ENCODE measurements at regions of chr9 and their contacts with region 1.

Region 1: DNA sequence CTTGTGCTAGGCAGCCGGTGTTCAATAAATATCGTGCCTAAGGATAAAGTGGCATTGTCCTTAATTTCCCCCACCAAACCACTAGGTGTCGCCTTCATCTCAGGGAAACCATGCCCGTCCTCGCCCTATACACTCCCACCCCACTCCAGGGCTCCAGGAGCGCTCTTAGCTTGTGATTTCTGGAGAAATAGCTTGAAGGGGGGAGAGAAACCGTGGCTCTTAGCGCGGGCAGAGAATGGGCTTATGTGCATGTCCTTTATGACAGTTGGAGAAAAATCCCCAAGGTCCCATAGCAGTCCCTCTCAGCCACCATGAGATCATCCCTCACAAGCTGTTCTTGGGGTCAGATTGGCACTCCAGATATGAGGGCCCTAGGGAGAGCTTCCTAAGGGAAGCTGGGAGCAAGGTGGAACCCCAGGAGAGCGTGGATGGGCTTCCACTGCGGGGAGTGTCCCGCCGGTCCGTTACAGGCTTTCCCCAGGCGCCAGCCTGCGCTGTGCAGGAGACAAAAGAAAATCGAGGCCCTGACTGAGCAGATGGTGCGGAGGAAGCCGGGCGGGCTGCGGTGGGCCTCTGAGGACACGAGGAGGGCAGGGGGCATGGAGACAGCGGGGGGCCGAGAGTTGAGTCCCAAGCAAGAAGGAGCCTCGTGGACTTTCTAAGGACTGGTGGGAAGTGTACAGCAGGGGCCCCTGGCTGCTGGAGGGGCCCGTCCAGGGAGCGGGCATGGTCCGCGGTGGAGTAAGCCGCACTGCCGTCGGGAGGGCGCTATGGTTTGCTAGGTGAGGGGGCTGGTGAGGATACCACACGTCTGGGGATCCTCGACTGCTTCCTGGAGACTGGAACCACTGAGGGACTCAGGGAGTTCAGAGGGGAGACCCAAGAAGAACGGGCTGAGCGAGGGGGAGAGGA is 750 bp upstream of the NPR2 start:
- DNase-seq: peak; percentile 79
- ATAC-seq: peak; percentile 92
- H3K4me3 ChIP-seq: no peak overlapping the region
- H3K4me3 Mint-ChIP-seq: peak overlapping the region; percentile 41
- H3K27ac ChIP-seq: no peak overlapping the region
- H3K27ac Mint-ChIP-seq: peak overlapping the region; percentile 26
- H3K4me1 ChIP-seq: peaks cover 5% of the 10 kb centered on the region in 2 donors
- H3K4me1 Mint-ChIP-seq: peaks cover 9% of the 10 kb centered on the region
- H3K27me3 ChIP-seq: peaks cover 0 to 6% (median 3%) of the 10 kb centered on the region in 4 experiments
- H3K27me3 Mint-ChIP-seq: peaks cover 4% of the 10 kb centered on the region
- CTCF ChIP-seq: peak; percentile 93

Region 2: GRCh38 chr9:35716230-35716629 is 74.4 kb before region 1 on chr9:
- CTCF ChIA-PET with region 1: no interaction called
- POLR2A ChIA-PET with region 1: no interaction called
- intact Hi-C with region 1: no loop called
- DNase-seq: no peak
- ATAC-seq: no peak
- H3K4me3 ChIP-seq: no peak overlapping the region
- H3K4me3 Mint-ChIP-seq: no peak overlapping the region
- H3K27ac ChIP-seq: no peak overlapping the region
- H3K27ac Mint-ChIP-seq: peak overlapping the region; percentile 65
- H3K4me1 ChIP-seq: peaks cover 16 to 24% of the 10 kb centered on the region in 2 donors
- H3K4me1 Mint-ChIP-seq: peaks cover 26% of the 10 kb centered on the region
- H3K27me3 ChIP-seq: no peaks in the 10 kb centered on the region
- H3K27me3 Mint-ChIP-seq: no peaks in the 10 kb centered on the region
- CTCF ChIP-seq: no peak

Region 3: DNA sequence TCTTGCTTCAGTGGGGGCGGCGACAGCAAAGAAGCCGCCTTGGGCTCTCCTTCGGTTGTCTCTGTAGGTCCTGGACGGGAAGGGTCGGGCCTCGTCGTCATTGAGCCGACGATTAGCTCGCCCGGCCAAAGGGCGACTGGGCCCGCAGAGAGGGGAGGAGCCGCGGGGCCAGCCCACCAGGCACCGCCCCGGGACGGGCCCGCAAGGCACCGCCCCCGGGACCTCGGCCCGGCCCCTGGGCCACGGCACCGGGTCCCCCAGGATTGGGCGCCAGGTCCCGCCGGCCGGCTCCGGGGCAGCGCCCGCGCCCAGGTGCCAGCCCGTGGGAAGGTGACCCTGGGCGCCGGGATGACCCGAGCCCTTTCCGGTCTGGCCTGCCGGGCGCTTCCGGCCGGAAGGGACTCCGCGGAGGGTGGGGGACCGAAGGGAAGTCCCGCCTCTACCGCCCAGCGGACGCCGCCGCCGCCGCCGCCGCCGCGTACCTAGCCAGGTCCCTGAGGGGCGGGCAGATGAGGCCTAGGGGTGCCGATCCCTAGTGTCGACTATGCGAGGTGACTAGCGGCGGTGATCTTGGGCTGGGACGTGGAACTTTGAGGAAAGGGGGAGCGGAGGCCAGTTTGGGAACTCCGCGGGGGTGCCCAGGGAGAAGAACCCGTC is 41.7 kb before region 1 on chr9 and contains the starts of genes GBA2 and RGP1:
- CTCF ChIA-PET with region 1: interaction called, 19 read pairs
- POLR2A ChIA-PET with region 1: no interaction called
- intact Hi-C with region 1: no loop called
- DNase-seq: peak; percentile 82
- ATAC-seq: peak; percentile 83
- H3K4me3 ChIP-seq: peak within 1 kb of the TSS; percentile 73 to 92 (median 84)
- H3K4me3 Mint-ChIP-seq: peak within 1 kb of the TSS; percentile 96
- H3K27ac ChIP-seq: peak within 1 kb of the TSS; percentile 71 to 77
- H3K27ac Mint-ChIP-seq: peak within 1 kb of the TSS; percentile 96
- H3K4me1 ChIP-seq: peaks cover 37 to 41% of the 10 kb centered on the region in 2 donors
- H3K4me1 Mint-ChIP-seq: peaks cover 50% of the 10 kb centered on the region
- H3K27me3 ChIP-seq: no peaks in the 10 kb centered on the region
- H3K27me3 Mint-ChIP-seq: no peaks in the 10 kb centered on the region
- CTCF ChIP-seq: no peak
- total RNA-seq, gene GBA2: 137 and 158 TPM in 2 replicates
- total RNA-seq, gene RGP1: 42.3 and 44.3 TPM in 2 replicates

Region 4: DNA sequence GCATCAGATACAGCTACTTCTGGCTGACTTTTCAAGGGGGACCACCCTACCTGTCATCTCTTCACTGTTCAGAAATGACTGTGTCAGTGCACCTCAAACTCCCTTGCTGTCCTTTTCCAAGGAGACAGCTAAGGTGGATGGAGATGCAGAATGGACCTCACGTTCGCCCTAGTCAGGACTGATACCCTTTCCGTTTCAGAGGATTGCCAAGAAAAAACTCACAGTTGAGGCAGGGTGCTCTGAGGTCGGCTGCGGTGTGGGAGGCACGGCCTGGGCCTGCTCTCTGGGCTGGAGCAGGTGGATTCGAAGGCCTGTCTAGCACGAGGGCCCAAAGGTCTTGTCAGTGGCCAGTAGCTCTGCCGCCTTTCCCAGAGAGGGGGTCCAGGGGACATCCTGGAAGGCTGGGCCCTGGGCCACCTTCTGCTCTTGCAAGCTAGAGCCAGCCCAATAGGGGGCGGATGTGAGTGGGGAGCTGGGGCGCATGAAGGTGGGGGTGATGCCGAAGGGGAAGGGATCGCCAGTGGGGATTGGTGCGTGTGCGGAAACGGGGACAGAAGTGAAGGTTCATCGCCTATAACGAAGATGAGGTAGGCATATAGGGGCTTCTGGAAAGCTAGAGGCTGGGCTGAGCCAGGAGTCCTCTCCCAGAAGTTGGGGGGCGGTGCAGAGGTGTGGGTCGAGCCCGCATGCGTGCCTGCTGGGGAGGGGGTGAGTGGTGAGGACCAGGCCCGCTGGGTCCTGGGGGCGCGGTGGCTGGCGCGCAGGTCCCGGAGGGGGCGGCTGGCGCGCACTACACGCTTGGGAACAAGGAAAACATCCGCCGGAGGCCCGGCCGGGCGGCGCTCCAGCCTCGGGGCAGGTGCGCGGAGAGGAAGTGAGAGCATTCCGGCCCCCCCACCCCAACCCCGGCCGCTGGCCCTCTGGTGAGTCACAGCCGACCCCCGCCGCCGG is 34.1 kb before region 1 on chr9:
- CTCF ChIA-PET with region 1: interaction called, 4 read pairs
- POLR2A ChIA-PET with region 1: no interaction called
- intact Hi-C with region 1: loop called (anchors 2 kb)
- DNase-seq: peak; percentile 84
- ATAC-seq: peak; percentile 80
- H3K4me3 ChIP-seq: peak overlapping the region; percentile 39 to 85 (median 81)
- H3K4me3 Mint-ChIP-seq: peak overlapping the region; percentile 93
- H3K27ac ChIP-seq: peak overlapping the region; percentile 92 to 94
- H3K27ac Mint-ChIP-seq: peak overlapping the region; percentile 97
- H3K4me1 ChIP-seq: peaks cover 34 to 44% of the 10 kb centered on the region in 2 donors
- H3K4me1 Mint-ChIP-seq: peaks cover 65% of the 10 kb centered on the region
- H3K27me3 ChIP-seq: no peaks in the 10 kb centered on the region
- H3K27me3 Mint-ChIP-seq: no peaks in the 10 kb centered on the region
- CTCF ChIP-seq: peak; percentile 70

Region 5: GRCh38 chr9:35774907-35775635 is 15.6 kb before region 1 on chr9:
- CTCF ChIA-PET with region 1: interaction called, 22 read pairs
- POLR2A ChIA-PET with region 1: no interaction called
- intact Hi-C with region 1: no loop called
- DNase-seq: no peak
- ATAC-seq: no peak
- H3K4me3 ChIP-seq: no peak overlapping the region
- H3K4me3 Mint-ChIP-seq: peak overlapping the region; percentile 16
- H3K27ac ChIP-seq: peak overlapping the region in 1 of 2 donors; percentile 11
- H3K27ac Mint-ChIP-seq: peak overlapping the region; percentile 85
- H3K4me1 ChIP-seq: peaks cover 6 to 15% of the 10 kb centered on the region in 2 donors
- H3K4me1 Mint-ChIP-seq: peaks cover 15% of the 10 kb centered on the region
- H3K27me3 ChIP-seq: no peaks in the 10 kb centered on the region
- H3K27me3 Mint-ChIP-seq: no peaks in the 10 kb centered on the region
- CTCF ChIP-seq: no peak

Region 6: GRCh38 chr9:35829084-35829763 is 38.6 kb after region 1 on chr9 and contains the start of gene TMEM8B:
- CTCF ChIA-PET with region 1: interaction called, 84 read pairs
- POLR2A ChIA-PET with region 1: interaction called, 3 read pairs
- intact Hi-C with region 1: loop called (anchors 1 kb)
- DNase-seq: peak; percentile 94
- ATAC-seq: peak; percentile 92
- H3K4me3 ChIP-seq: peak within 1 kb of the TSS; percentile 32 to 80 (median 78)
- H3K4me3 Mint-ChIP-seq: peak within 1 kb of the TSS; percentile 96
- H3K27ac ChIP-seq: peak within 1 kb of the TSS; percentile 60 to 78
- H3K27ac Mint-ChIP-seq: peak within 1 kb of the TSS; percentile 89
- H3K4me1 ChIP-seq: peaks cover 24 to 35% of the 10 kb centered on the region in 2 donors
- H3K4me1 Mint-ChIP-seq: peaks cover 44% of the 10 kb centered on the region
- H3K27me3 ChIP-seq: no peaks in the 10 kb centered on the region
- H3K27me3 Mint-ChIP-seq: no peaks in the 10 kb centered on the region
- CTCF ChIP-seq: no peak
- total RNA-seq, gene TMEM8B: 13.6 and 14.5 TPM in 2 replicates

Region 7: GRCh38 chr9:35859310-35859989 is 68.8 kb after region 1 on chr9:
- CTCF ChIA-PET with region 1: interaction called, 11 read pairs
- POLR2A ChIA-PET with region 1: no interaction called
- intact Hi-C with region 1: no loop called
- DNase-seq: peak; percentile 45
- ATAC-seq: peak; percentile 76
- H3K4me3 ChIP-seq: no peak overlapping the region
- H3K4me3 Mint-ChIP-seq: no peak overlapping the region
- H3K27ac ChIP-seq: no peak overlapping the region
- H3K27ac Mint-ChIP-seq: no peak overlapping the region
- H3K4me1 ChIP-seq: no peaks in the 10 kb centered on the region
- H3K4me1 Mint-ChIP-seq: no peaks in the 10 kb centered on the region
- H3K27me3 ChIP-seq: peaks cover 0 to 12% (median 3%) of the 10 kb centered on the region in 4 experiments
- H3K27me3 Mint-ChIP-seq: peaks cover 22% of the 10 kb centered on the region
- CTCF ChIP-seq: no peak

Region 8: GRCh38 chr9:35891646-35892045 is 101.0 kb after region 1 on chr9:
- CTCF ChIA-PET with region 1: interaction called, 11 read pairs
- POLR2A ChIA-PET with region 1: no interaction called
- intact Hi-C with region 1: no loop called
- DNase-seq: no peak
- ATAC-seq: no peak
- H3K4me3 ChIP-seq: no peak overlapping the region
- H3K4me3 Mint-ChIP-seq: no peak overlapping the region
- H3K27ac ChIP-seq: no peak overlapping the region
- H3K27ac Mint-ChIP-seq: no peak overlapping the region
- H3K4me1 ChIP-seq: no peaks in the 10 kb centered on the region
- H3K4me1 Mint-ChIP-seq: no peaks in the 10 kb centered on the region
- H3K27me3 ChIP-seq: peaks cover 0 to 22% (median 8%) of the 10 kb centered on the region in 4 experiments
- H3K27me3 Mint-ChIP-seq: peaks cover 23% of the 10 kb centered on the region
- CTCF ChIP-seq: no peak

Region 9: GRCh38 chr9:36151316-36152210 is 360.9 kb after region 1 on chr9:
- CTCF ChIA-PET with region 1: no interaction called
- POLR2A ChIA-PET with region 1: no interaction called
- intact Hi-C with region 1: no loop called
- DNase-seq: peak; percentile 90
- ATAC-seq: peak; percentile 98
- H3K4me3 ChIP-seq: peak overlapping the region; percentile 22 to 56 (median 44)
- H3K4me3 Mint-ChIP-seq: peak overlapping the region; percentile 87
- H3K27ac ChIP-seq: peak overlapping the region; percentile 94 to 97
- H3K27ac Mint-ChIP-seq: peak overlapping the region; percentile 98
- H3K4me1 ChIP-seq: peaks cover 41 to 66% of the 10 kb centered on the region in 2 donors
- H3K4me1 Mint-ChIP-seq: peaks cover 56% of the 10 kb centered on the region
- H3K27me3 ChIP-seq: no peaks in the 10 kb centered on the region
- H3K27me3 Mint-ChIP-seq: no peaks in the 10 kb centered on the region
- CTCF ChIP-seq: no peak

Measured in B cell (primary cell).